ENCODE measurements at regions of chr9 and their contacts with region 1.

Region 1: GRCh38 chr9:95087659-95088242 is 229.8 kb downstream of the FANCC start:
- DNase-seq: no peak
- H3K4me3 ChIP-seq: no peak overlapping the region
- H3K27ac ChIP-seq: no peak overlapping the region
- H3K4me1 ChIP-seq: peaks cover 9 to 34% of the 10 kb centered on the region in 2 donors
- H3K27me3 ChIP-seq: no peaks in the 10 kb centered on the region
- CTCF ChIP-seq: no peak
- POLR2A ChIP-seq: no peak

Region 2: GRCh38 chr9:94681508-94681907 is 406.2 kb before region 1 on chr9:
- intact Hi-C with region 1: no loop called
- DNase-seq: peak; percentile 75 to 93 (median 89)
- H3K4me3 ChIP-seq: no peak overlapping the region
- H3K27ac ChIP-seq: peak overlapping the region in 1 of 5 donors; percentile 23
- H3K4me1 ChIP-seq: no peaks in the 10 kb centered on the region
- H3K27me3 ChIP-seq: no peaks in the 10 kb centered on the region
- CTCF ChIP-seq: peak; percentile 44 to 91 (median 81)
- POLR2A ChIP-seq: no peak

Region 3: GRCh38 chr9:95031711-95032461 is 55.9 kb before region 1 on chr9:
- intact Hi-C with region 1: loop called in 1 of 2 experiments (anchors 10 kb)
- DNase-seq: no peak
- H3K4me3 ChIP-seq: no peak overlapping the region
- H3K27ac ChIP-seq: peak overlapping the region in 2 of 5 donors; percentile 6 to 24
- H3K4me1 ChIP-seq: peaks cover 0 to 42% of the 10 kb centered on the region in 2 donors
- H3K27me3 ChIP-seq: no peaks in the 10 kb centered on the region
- CTCF ChIP-seq: no peak
- POLR2A ChIP-seq: no peak

Region 4: DNA sequence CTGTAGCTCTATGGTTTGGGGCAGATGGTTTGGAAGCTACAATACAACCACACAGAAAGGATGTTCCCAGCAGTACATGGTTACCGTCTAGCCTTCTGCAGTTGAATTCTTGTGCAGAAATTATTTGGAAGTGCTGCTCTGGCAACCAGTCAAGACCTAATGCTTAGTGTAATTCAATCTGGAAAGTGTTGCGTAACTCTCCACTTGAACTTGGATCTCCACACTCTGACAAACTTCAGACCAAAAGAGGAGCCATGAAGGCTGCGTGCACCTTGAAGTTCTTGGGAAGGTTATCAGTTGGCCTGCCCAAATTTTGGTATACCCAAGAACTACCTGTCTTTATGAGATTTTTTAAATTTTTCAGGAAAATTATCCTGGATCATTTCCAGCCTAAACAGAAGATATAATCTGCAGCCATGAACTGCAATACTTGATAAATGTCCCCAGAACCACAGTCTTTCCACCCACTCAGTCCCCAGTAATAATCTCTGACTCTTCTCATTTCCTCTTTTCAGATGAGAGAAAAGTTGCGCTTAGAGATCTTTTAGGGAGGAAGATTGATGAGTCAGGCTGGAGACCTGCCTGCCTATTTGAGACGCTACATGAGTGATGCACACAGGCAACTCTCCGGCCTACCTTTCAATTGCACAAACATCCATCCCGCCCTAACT is 69.9 kb after region 1 on chr9:
- intact Hi-C with region 1: no loop called
- DNase-seq: peak in 5 of 7 donors; percentile 29 to 49 (median 46)
- H3K4me3 ChIP-seq: no peak overlapping the region
- H3K27ac ChIP-seq: peak overlapping the region in 2 of 5 donors; percentile 7 to 49
- H3K4me1 ChIP-seq: peaks cover 0 to 3% of the 10 kb centered on the region in 2 donors
- H3K27me3 ChIP-seq: no peaks in the 10 kb centered on the region
- CTCF ChIP-seq: no peak
- POLR2A ChIP-seq: no peak

Measured in adrenal gland (tissue), 19 donors.